ENCODE measurements at regions of chrX and their contacts with region 1.

Region 1: DNA sequence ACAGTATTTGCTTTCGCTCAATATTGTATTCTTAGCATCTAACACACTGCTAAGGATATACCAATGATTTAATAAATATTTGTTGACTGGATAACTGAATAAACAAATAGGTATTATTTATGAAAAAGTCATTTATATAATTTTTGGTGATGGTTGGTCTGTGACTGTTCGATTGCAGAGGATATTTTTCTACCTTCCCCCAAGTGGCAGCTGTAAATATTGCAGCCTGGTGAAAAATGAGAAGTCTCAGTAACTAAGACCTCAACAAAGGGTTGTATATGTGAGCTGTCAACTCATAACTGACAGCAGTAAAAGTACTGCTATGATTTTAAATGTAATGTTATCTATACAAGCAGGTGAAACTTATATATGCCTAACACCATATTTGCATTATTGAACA is 36.0 kb downstream of the HTR2C start:
- DNase-seq: peak; percentile 10
- H3K4me3 ChIP-seq: no peak overlapping the region
- H3K27ac ChIP-seq: no peak overlapping the region
- H3K4me1 ChIP-seq: no peaks in the 10 kb centered on the region
- H3K27me3 ChIP-seq: no peaks in the 10 kb centered on the region
- CTCF ChIP-seq: peak; percentile 49

Region 2: GRCh38 chrX:114462266-114462665 is 157.6 kb before region 1 on chrX:
- CTCF ChIA-PET with region 1: no interaction called
- POLR2A ChIA-PET with region 1: no interaction called
- intact Hi-C with region 1: no loop called
- DNase-seq: no peak
- H3K4me3 ChIP-seq: no peak overlapping the region
- H3K27ac ChIP-seq: no peak overlapping the region
- H3K4me1 ChIP-seq: no peaks in the 10 kb centered on the region
- H3K27me3 ChIP-seq: peaks cover 19% of the 10 kb centered on the region
- CTCF ChIP-seq: no peak

Region 3: DNA sequence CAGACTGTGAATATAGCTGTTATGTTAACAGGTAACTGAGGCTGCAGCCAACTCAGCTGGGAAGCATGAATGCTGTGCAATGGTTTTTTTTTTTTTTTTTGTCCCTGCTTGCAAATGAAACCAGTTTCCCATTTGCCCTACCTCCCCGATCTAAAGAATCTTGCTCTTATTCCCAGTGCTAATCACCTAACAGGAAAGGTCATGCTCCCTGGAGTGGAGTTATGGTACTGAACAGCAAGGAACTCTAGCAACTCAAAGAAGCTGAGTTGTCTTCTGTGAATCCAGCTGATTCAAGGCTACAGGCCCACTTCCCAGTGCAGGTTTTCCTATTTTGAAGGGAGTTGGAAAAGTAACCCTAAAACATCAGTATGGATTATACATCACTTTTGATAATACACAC is 16.1 kb after region 1 on chrX:
- CTCF ChIA-PET with region 1: no interaction called
- POLR2A ChIA-PET with region 1: no interaction called
- intact Hi-C with region 1: no loop called
- DNase-seq: no peak
- H3K4me3 ChIP-seq: no peak overlapping the region
- H3K27ac ChIP-seq: no peak overlapping the region
- H3K4me1 ChIP-seq: no peaks in the 10 kb centered on the region
- H3K27me3 ChIP-seq: no peaks in the 10 kb centered on the region
- CTCF ChIP-seq: no peak

Region 4: DNA sequence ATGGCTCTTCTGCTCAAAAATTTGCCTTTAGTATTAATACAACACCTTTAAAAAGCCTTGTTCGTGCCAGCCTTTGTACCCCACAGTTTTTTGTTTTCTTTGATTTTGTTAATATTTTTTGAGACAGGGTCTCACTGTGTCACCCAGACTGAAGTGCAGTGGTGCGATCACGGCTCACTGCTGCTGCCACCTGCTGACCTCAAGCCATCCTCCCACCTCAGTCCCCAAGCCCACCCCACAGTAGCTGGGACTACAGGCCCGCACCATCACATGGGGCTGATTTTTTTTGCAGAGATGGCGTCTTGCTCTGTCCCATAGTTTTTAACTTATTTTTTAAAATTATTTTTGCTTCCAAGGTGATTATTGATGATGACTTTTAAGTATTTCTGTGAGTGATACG is 98.0 kb after region 1 on chrX:
- CTCF ChIA-PET with region 1: no interaction called
- POLR2A ChIA-PET with region 1: no interaction called
- intact Hi-C with region 1: loop called (anchors 5 kb)
- DNase-seq: peak; percentile 21
- H3K4me3 ChIP-seq: no peak overlapping the region
- H3K27ac ChIP-seq: no peak overlapping the region
- H3K4me1 ChIP-seq: no peaks in the 10 kb centered on the region
- H3K27me3 ChIP-seq: peaks cover 4% of the 10 kb centered on the region
- CTCF ChIP-seq: peak; percentile 65

Region 5: DNA sequence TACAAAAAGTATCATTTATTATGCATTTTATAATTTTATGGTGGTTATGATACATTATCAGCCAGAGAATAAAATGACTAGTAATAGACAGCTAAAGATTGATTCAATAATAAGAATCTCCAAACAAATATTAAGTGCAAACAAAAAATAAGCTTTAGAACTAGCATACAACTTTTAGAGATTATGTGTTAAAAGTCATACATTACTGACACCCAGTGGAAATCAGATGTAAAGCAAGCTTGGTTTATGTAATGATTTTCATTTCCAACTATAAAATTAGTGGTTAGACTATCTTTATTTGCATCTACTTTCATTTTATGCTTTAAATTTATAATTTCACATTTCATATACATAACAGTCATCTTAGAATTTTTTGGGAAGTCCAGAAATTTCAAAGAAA is 339.9 kb after region 1 on chrX:
- CTCF ChIA-PET with region 1: no interaction called
- POLR2A ChIA-PET with region 1: no interaction called
- intact Hi-C with region 1: loop called (anchors 5 kb)
- DNase-seq: peak; percentile 3
- H3K4me3 ChIP-seq: no peak overlapping the region
- H3K27ac ChIP-seq: no peak overlapping the region
- H3K4me1 ChIP-seq: no peaks in the 10 kb centered on the region
- H3K27me3 ChIP-seq: peaks cover 27% of the 10 kb centered on the region
- CTCF ChIP-seq: peak; percentile 65

Region 6: DNA sequence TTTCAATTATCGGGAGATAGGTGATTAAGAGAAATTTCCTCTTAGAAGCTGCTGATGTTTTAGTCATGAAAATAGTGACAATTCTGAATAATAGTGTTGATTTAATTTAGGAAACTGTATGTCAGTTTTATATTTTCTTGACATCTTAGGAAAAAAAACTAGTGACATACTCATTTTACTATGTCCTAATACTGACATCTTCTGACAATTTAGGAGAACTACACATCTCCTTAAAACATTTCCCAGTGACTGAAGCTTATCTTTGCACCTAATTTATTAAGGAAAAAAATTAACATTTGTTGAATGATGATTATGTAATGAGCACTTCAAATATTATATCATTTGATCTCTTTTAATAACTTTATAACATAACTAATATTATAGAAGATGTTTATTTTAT is 527.3 kb after region 1 on chrX:
- CTCF ChIA-PET with region 1: no interaction called
- POLR2A ChIA-PET with region 1: no interaction called
- intact Hi-C with region 1: loop called (anchors 10 kb)
- DNase-seq: peak; percentile 6
- H3K4me3 ChIP-seq: no peak overlapping the region
- H3K27ac ChIP-seq: no peak overlapping the region
- H3K4me1 ChIP-seq: no peaks in the 10 kb centered on the region
- H3K27me3 ChIP-seq: peaks cover 4% of the 10 kb centered on the region
- CTCF ChIP-seq: peak; percentile 58

Region 7: DNA sequence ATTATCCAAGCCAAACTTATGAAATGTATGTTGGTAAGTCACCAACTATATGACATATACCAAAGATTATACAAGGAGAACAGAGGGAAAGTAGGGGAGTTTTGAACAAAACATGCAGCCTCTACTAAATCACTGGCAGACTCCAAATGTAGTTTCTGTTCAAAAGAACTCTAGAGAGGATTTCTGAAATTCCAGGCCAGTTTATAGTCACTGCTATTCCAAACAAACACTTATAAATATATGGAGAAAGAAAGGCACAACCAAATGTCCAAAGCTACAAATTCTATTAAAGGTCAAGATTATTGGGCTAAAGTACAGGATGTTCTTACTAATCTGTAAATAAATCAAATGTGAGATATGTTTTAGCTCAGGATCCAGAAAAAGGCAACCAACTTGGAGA is 616.7 kb after region 1 on chrX:
- CTCF ChIA-PET with region 1: no interaction called
- POLR2A ChIA-PET with region 1: no interaction called
- intact Hi-C with region 1: no loop called
- DNase-seq: no peak
- H3K4me3 ChIP-seq: no peak overlapping the region
- H3K27ac ChIP-seq: no peak overlapping the region
- H3K4me1 ChIP-seq: no peaks in the 10 kb centered on the region
- H3K27me3 ChIP-seq: peaks cover 43% of the 10 kb centered on the region
- CTCF ChIP-seq: no peak

Measured in A673 (cell line).